ENCODE measurements at regions of chr17 and their contacts with region 1.

Region 1: DNA sequence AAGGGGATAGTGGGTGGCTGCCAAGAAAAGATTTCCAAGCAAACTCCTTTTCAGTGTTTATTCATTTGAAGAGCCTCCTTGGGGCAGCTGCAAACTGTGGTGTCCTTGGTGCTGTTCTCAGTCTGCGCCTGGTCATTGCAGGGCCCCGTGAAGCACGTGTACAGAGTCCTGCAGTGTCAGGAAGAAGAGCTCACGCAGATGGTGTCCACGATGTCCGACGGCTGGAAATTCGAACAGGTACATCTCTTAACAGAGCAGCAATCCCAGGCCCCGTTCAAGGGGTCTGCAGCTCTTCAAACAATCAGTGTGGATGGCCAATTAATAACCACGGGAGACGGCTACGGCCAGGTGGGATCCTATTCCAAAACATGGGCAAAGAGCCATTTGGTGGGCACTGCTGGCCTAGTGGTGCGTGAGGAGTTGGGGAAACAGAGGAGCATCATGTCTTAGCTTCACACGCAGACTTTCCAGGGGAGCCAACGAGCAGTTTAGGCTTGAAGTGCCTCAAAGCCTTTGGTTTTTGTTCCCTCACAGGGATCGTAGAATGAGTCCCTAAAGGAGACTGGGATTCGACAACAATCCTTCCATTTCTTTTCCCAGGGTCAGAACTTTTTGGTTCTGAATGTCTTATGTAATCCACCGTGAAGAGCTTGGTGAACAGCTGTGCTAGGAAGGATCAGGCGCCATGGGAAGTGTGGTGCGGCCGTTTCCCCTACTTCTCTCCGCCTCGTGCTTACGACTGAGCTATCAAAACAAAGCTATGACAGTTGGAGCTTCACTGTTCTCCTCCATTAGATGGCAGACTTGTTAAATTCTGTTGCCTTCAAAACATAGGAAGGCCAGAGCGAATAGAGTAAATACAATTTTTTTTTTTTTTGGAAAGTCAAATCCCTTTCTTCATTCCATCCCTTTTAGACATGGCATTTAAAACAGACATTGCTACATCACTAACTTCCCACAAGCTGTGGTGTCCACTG is 12.6 kb downstream of the KCTD2 start:
- DNase-seq: peak in 6 of 9 donors; percentile 32 to 56 (median 48)
- ATAC-seq: peak; percentile 79
- H3K4me3 ChIP-seq: no peak overlapping the region
- H3K4me3 Mint-ChIP-seq: no peak overlapping the region
- H3K27ac ChIP-seq: peak overlapping the region; percentile 23
- H3K27ac Mint-ChIP-seq: peak overlapping the region in 8 of 9 donors; percentile 51 to 91 (median 81)
- H3K4me1 ChIP-seq: no peaks in the 10 kb centered on the region
- H3K4me1 Mint-ChIP-seq: peaks cover 0 to 26% (median 20%) of the 10 kb centered on the region in 7 donors
- H3K27me3 ChIP-seq: no peaks in the 10 kb centered on the region
- H3K27me3 Mint-ChIP-seq: no peaks in the 10 kb centered on the region

Region 2: GRCh38 chr17:74950207-74950606 is 109.5 kb before region 1 on chr17:
- CTCF ChIA-PET with region 1: no interaction called
- POLR2A ChIA-PET with region 1: no interaction called
- intact Hi-C with region 1: no loop called
- DNase-seq: no peak
- ATAC-seq: no peak
- H3K4me3 ChIP-seq: no peak overlapping the region
- H3K4me3 Mint-ChIP-seq: no peak overlapping the region
- H3K27ac ChIP-seq: no peak overlapping the region
- H3K27ac Mint-ChIP-seq: no peak overlapping the region
- H3K4me1 ChIP-seq: no peaks in the 10 kb centered on the region
- H3K4me1 Mint-ChIP-seq: no peaks in the 10 kb centered on the region
- H3K27me3 ChIP-seq: no peaks in the 10 kb centered on the region
- H3K27me3 Mint-ChIP-seq: peaks cover 0 to 6% (median 2%) of the 10 kb centered on the region in 5 donors

Region 3: DNA sequence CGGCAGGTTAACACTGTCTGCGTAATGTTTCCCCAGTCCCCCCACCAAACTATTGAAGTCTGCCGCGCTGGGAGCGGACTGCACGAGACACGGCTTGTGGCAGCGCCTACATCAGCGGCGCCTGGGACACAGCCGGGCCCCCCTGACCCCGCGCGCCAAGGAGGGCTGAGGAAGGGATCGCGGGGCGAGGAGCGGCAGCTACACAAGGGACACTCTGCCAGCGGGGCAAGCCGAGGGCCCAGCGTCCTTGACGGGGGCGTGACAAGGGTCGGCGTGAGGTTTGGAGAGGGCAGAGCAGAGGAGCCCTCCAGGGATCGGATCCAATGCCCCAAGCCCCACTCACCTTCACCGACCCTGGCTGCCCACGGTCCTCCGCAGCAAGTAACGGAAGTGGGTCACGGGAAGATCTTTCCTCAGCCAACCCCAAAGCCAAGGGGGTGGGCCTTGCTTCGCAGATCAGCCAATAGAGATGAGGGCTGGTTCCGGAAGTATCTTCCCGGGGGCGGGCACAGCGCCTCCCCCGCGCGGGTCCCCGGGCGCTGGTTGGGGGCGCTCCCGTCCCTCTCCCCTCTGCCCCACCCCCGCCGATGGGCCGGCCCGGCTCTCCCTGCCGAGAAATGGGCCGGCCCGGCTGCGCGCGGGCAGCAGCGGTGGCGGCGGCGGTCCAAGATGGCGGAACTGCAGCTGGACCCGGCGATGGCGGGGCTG is 12.9 kb before region 1 on chr17 and contains the starts of genes ATP5PD and KCTD2:
- CTCF ChIA-PET with region 1: interaction called, 6 read pairs
- POLR2A ChIA-PET with region 1: interaction called, 18 read pairs
- intact Hi-C with region 1: no loop called
- DNase-seq: peak; percentile 82 to 93 (median 91)
- ATAC-seq: peak; percentile 98
- H3K4me3 ChIP-seq: peak within 1 kb of the TSS; percentile 77
- H3K4me3 Mint-ChIP-seq: peak within 1 kb of the TSS; percentile 95 to 99 (median 98)
- H3K27ac ChIP-seq: peak within 1 kb of the TSS; percentile 93
- H3K27ac Mint-ChIP-seq: peak within 1 kb of the TSS; percentile 92 to 99 (median 96)
- H3K4me1 ChIP-seq: peaks cover 13 to 16% of the 10 kb centered on the region in 2 donors
- H3K4me1 Mint-ChIP-seq: peaks cover 30 to 62% (median 49%) of the 10 kb centered on the region in 7 donors
- H3K27me3 ChIP-seq: no peaks in the 10 kb centered on the region
- H3K27me3 Mint-ChIP-seq: no peaks in the 10 kb centered on the region
- total RNA-seq, gene ATP5PD: 113 to 195 (median 161) TPM
- total RNA-seq, gene KCTD2: 19.5 to 35.7 (median 23.0) TPM

Region 4: DNA sequence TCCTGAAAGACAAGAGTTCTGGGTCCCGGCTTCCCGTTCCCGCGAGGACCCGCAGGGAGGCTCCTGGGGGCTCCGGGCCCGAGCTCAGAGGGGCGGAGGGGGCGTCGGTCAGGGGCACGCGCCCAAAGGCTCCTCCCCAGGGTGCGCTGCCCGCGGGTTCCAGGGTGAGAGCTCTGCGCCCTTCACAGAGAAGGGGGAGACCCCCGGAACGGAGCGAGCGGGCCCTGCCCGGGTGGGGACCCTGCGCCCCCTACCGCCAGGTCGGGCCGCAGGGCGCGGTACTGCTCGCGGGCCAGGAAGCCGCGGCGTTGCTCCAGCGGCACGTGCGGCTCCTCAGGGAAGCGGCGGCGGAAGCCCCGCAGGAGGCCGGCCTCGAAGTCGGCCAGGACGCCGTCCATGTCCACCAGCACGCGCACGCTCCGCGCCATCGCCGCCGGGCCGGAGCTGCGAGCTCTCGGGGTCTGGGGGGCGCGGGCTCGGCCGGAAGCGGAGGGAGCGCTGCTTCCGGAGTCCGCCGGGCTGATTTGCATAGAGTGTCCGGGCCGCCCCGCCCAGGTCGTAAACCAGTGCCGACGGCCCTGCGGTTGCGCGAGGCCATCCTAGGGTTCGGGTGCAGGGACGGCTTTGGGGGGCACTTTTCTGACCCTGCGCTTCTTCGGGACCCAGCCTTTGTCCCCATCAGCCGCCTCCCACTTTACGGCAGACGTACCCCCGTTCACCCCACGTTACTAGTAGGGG is 71.8 kb after region 1 on chr17 and contains the start of gene NT5C:
- CTCF ChIA-PET with region 1: interaction called, 13 read pairs
- POLR2A ChIA-PET with region 1: no interaction called
- intact Hi-C with region 1: no loop called
- DNase-seq: peak; percentile 32 to 82 (median 50)
- ATAC-seq: peak; percentile 85
- H3K4me3 ChIP-seq: peak within 1 kb of the TSS; percentile 71
- H3K4me3 Mint-ChIP-seq: peak within 1 kb of the TSS; percentile 79 to 93 (median 88)
- H3K27ac ChIP-seq: peak within 1 kb of the TSS; percentile 84
- H3K27ac Mint-ChIP-seq: peak within 1 kb of the TSS; percentile 76 to 93 (median 88)
- H3K4me1 ChIP-seq: peaks cover 5 to 7% of the 10 kb centered on the region in 2 donors
- H3K4me1 Mint-ChIP-seq: peaks cover 7 to 23% (median 10%) of the 10 kb centered on the region in 7 donors
- H3K27me3 ChIP-seq: no peaks in the 10 kb centered on the region
- H3K27me3 Mint-ChIP-seq: no peaks in the 10 kb centered on the region
- total RNA-seq, gene NT5C: 23.4 to 54.8 (median 37.5) TPM

Region 5: GRCh38 chr17:75173526-75173925 is 113.9 kb after region 1 on chr17:
- CTCF ChIA-PET with region 1: interaction called, 26 read pairs
- POLR2A ChIA-PET with region 1: interaction called, 3 read pairs
- intact Hi-C with region 1: loop called in 1 of 2 experiments (anchors 1 kb)
- DNase-seq: no peak
- ATAC-seq: no peak
- H3K4me3 ChIP-seq: no peak overlapping the region
- H3K4me3 Mint-ChIP-seq: no peak overlapping the region
- H3K27ac ChIP-seq: no peak overlapping the region
- H3K27ac Mint-ChIP-seq: peak overlapping the region in 3 of 9 donors; percentile 16 to 51 (median 31)
- H3K4me1 ChIP-seq: peaks cover 0 to 3% of the 10 kb centered on the region in 2 donors
- H3K4me1 Mint-ChIP-seq: peaks cover 0 to 24% (median 23%) of the 10 kb centered on the region in 7 donors
- H3K27me3 ChIP-seq: no peaks in the 10 kb centered on the region
- H3K27me3 Mint-ChIP-seq: no peaks in the 10 kb centered on the region

Region 6: GRCh38 chr17:75199886-75200618 is 140.4 kb after region 1 on chr17:
- CTCF ChIA-PET with region 1: interaction called, 24 read pairs
- POLR2A ChIA-PET with region 1: interaction called, 4 read pairs
- intact Hi-C with region 1: loop called (anchors 1 kb)
- DNase-seq: no peak
- ATAC-seq: no peak
- H3K4me3 ChIP-seq: no peak overlapping the region
- H3K4me3 Mint-ChIP-seq: no peak overlapping the region
- H3K27ac ChIP-seq: no peak overlapping the region
- H3K27ac Mint-ChIP-seq: no peak overlapping the region
- H3K4me1 ChIP-seq: no peaks in the 10 kb centered on the region
- H3K4me1 Mint-ChIP-seq: peaks cover 4 to 12% (median 8%) of the 10 kb centered on the region in 7 donors
- H3K27me3 ChIP-seq: no peaks in the 10 kb centered on the region
- H3K27me3 Mint-ChIP-seq: no peaks in the 10 kb centered on the region

Region 7: GRCh38 chr17:75205037-75205792 is 145.6 kb after region 1 on chr17 and contains the start of gene NUP85:
- CTCF ChIA-PET with region 1: interaction called, 24 read pairs
- POLR2A ChIA-PET with region 1: interaction called, 4 read pairs
- intact Hi-C with region 1: loop called (anchors 1 kb)
- DNase-seq: peak; percentile 87 to 97 (median 93)
- ATAC-seq: peak; percentile 96
- H3K4me3 ChIP-seq: peak within 1 kb of the TSS; percentile 82
- H3K4me3 Mint-ChIP-seq: peak within 1 kb of the TSS; percentile 91 to 98 (median 96)
- H3K27ac ChIP-seq: peak within 1 kb of the TSS; percentile 95
- H3K27ac Mint-ChIP-seq: peak within 1 kb of the TSS; percentile 94 to 100 (median 99)
- H3K4me1 ChIP-seq: peaks cover 0 to 5% of the 10 kb centered on the region in 2 donors
- H3K4me1 Mint-ChIP-seq: peaks cover 12 to 47% (median 26%) of the 10 kb centered on the region in 7 donors
- H3K27me3 ChIP-seq: no peaks in the 10 kb centered on the region
- H3K27me3 Mint-ChIP-seq: no peaks in the 10 kb centered on the region
- total RNA-seq, gene NUP85: 96.3 to 143 (median 99.2) TPM

Region 8: DNA sequence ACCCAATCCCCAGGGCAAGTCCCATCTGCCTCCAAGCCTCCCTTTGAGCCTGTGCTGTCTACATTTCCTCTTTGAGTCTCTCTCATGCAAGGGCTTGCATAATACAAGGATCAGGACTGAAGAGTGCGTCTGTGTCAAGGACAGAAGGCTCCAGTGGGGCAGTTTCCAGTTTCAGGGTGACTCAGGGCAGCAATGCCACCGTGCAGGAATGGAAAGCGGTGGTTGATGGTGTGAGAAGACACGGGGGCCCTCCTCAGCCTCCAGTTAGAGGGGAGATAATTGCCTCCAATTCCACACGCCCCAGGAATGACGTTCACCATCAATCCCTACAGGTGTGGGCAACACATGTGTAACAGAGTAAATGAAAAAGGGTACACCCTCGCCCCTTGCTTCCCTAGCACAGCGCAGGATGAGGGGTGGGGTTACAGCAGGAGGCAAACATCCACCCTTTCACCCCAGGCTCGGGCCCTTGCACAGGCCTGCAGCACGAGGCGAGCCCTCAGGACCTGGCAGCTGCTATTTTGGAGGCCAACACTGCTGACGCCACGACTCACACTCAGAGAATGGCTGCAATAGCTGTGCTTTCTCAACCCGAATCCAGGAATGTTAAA is 254.4 kb after region 1 on chr17:
- CTCF ChIA-PET with region 1: no interaction called
- POLR2A ChIA-PET with region 1: no interaction called
- intact Hi-C with region 1: no loop called
- DNase-seq: no peak
- ATAC-seq: peak; percentile 64
- H3K4me3 ChIP-seq: no peak overlapping the region
- H3K4me3 Mint-ChIP-seq: peak overlapping the region in 3 of 10 donors; percentile 20 to 38 (median 25)
- H3K27ac ChIP-seq: no peak overlapping the region
- H3K27ac Mint-ChIP-seq: peak overlapping the region in 8 of 9 donors; percentile 44 to 81 (median 74)
- H3K4me1 ChIP-seq: peaks cover 0 to 13% of the 10 kb centered on the region in 2 donors
- H3K4me1 Mint-ChIP-seq: peaks cover 4 to 22% (median 8%) of the 10 kb centered on the region in 7 donors
- H3K27me3 ChIP-seq: no peaks in the 10 kb centered on the region
- H3K27me3 Mint-ChIP-seq: no peaks in the 10 kb centered on the region

Region 9: DNA sequence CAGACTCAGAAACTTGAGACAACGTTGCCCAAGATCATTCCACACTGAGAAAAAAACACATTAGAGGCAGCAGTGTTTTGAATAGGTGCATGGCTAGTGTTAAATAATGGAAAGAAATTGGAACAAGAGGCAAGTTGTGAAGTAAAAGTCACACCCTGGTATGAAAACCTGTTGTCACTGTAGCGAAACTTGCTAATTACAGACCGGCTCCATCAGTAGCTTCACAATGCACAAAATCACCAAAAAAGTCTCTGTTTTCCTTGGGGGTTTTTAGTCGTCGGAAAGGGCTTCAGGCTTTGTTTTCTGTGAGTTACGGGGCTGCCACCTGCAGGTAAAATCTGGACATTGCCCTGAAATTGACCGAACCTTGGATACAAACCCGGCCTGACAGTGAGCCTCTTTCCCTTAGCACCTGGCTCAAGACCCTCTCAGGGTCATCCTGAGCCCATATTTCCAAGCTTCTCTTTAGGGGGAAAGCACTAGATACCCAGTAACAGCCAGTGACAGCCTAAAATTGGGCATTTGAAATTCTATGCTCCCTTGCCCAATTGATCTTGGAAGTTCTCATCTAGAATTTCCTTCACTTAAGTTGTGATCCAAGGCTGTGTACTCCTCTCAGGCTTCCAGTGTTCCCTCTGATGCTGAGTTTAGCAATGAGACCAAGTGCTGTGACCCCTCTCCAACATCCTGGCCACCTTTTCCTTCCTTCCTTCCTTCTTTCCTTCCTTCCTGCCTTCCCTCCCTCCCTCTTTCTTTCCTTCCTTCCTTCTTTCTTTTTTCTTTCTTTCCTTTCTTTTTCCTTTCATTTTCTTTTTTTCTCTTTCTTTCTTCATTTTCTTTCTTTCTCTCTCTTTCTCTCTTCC is 353.0 kb after region 1 on chr17:
- CTCF ChIA-PET with region 1: interaction called, 4 read pairs
- POLR2A ChIA-PET with region 1: interaction called, 3 read pairs
- intact Hi-C with region 1: loop called in 1 of 2 experiments (anchors 1 kb)
- DNase-seq: peak; percentile 52 to 82 (median 73)
- ATAC-seq: peak; percentile 88
- H3K4me3 ChIP-seq: peak overlapping the region; percentile 25
- H3K4me3 Mint-ChIP-seq: peak overlapping the region; percentile 23 to 75 (median 60)
- H3K27ac ChIP-seq: peak overlapping the region; percentile 19
- H3K27ac Mint-ChIP-seq: peak overlapping the region in 6 of 9 donors; percentile 15 to 87 (median 45)
- H3K4me1 ChIP-seq: peaks cover 3 to 13% of the 10 kb centered on the region in 2 donors
- H3K4me1 Mint-ChIP-seq: peaks cover 14 to 26% (median 23%) of the 10 kb centered on the region in 7 donors
- H3K27me3 ChIP-seq: no peaks in the 10 kb centered on the region
- H3K27me3 Mint-ChIP-seq: peaks cover 0 to 27% (median 0%) of the 10 kb centered on the region in 5 donors

Measured in naive thymus-derived CD4-positive, alpha-beta T cell (primary cell).